ENCODE measurements at regions of chr3 and their contacts with region 1.

Region 1: DNA sequence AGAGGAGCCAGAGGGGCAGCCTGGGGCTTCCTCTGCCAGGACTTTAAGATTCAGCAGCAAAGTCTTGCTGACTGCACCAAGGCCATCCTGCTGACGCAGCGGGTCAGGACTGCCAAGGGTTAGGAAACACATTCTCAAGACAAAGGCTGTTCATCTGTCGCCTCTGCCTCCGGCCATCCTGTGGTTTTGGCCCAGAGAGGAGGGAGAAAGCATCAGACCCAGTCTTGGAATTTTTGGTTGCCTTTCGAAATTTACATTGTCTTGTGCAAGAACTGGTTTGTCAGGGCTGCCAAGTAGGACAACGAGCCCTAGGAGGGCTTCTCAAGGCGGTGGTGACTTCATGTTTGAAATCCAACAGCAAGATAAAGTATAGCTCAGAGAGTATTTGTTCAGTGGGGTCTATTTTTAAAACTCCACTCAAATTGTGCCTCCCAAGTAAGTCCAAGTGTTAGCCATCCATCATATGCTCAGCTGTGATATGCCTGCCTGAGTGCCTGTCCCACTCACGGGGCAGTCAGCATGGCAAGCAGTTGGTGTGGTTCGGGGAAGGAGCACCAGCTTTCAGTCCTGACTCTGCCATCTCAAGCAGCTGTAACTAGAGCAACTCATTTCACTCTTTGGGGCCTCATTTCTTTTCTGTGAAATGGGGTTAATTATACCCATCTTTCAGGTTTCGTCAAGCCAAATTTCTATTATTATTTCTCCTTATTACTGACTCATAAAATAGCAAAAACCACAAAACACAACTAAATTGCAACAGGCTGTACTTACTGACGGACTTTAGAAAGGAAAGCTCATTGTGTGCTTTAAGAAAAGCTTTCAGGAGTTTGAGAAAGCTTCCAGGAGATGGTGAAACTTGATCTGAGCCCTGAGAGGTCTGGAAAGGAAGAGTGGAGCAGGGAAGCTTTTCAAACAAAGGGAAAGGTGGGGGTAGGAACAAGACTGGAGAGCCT is 42.4 kb upstream of the RHO start:
- DNase-seq: peak; percentile 45 to 52
- H3K4me3 ChIP-seq: no peak overlapping the region
- H3K27ac ChIP-seq: peak overlapping the region in 4 of 5 donors; percentile 58 to 73 (median 65)
- H3K4me1 ChIP-seq: peaks cover 5 to 35% (median 9%) of the 10 kb centered on the region in 4 donors
- H3K27me3 ChIP-seq: no peaks in the 10 kb centered on the region
- CTCF ChIP-seq: no peak
- EP300 ChIP-seq: no peak
- POLR2A ChIP-seq: no peak

Region 2: GRCh38 chr3:129824926-129825541 is 339.0 kb after region 1 on chr3:
- intact Hi-C with region 1: loop called (anchors 5 kb)
- DNase-seq: peak in 1 of 2 donors; percentile 84
- H3K4me3 ChIP-seq: no peak overlapping the region
- H3K27ac ChIP-seq: no peak overlapping the region
- H3K4me1 ChIP-seq: peaks cover 0 to 48% (median 6%) of the 10 kb centered on the region in 4 donors
- H3K27me3 ChIP-seq: no peaks in the 10 kb centered on the region
- CTCF ChIP-seq: peak in 5 of 7 experiments; percentile 45 to 81 (median 63)
- EP300 ChIP-seq: no peak
- POLR2A ChIP-seq: no peak

Region 3: GRCh38 chr3:129927072-129927471 is 441.1 kb after region 1 on chr3:
- intact Hi-C with region 1: loop called (anchors 10 kb)
- DNase-seq: no peak
- H3K4me3 ChIP-seq: no peak overlapping the region
- H3K27ac ChIP-seq: no peak overlapping the region
- H3K4me1 ChIP-seq: no peaks in the 10 kb centered on the region
- H3K27me3 ChIP-seq: peaks cover 0 to 9% (median 0%) of the 10 kb centered on the region in 3 donors
- CTCF ChIP-seq: no peak
- EP300 ChIP-seq: no peak
- POLR2A ChIP-seq: no peak